ENCODE measurements at regions of chr16 and their contacts with region 1.

Region 1: GRCh38 chr16:56700195-56700594 is 17.9 kb downstream of the MT1X start:
- DNase-seq: peak; percentile 49
- H3K4me3 Mint-ChIP-seq: no peak overlapping the region
- H3K27ac Mint-ChIP-seq: peak overlapping the region; percentile 16
- H3K4me1 Mint-ChIP-seq: peaks cover 10% of the 10 kb centered on the region
- H3K27me3 Mint-ChIP-seq: no peaks in the 10 kb centered on the region
- CTCF ChIP-seq: no peak

Region 2: DNA sequence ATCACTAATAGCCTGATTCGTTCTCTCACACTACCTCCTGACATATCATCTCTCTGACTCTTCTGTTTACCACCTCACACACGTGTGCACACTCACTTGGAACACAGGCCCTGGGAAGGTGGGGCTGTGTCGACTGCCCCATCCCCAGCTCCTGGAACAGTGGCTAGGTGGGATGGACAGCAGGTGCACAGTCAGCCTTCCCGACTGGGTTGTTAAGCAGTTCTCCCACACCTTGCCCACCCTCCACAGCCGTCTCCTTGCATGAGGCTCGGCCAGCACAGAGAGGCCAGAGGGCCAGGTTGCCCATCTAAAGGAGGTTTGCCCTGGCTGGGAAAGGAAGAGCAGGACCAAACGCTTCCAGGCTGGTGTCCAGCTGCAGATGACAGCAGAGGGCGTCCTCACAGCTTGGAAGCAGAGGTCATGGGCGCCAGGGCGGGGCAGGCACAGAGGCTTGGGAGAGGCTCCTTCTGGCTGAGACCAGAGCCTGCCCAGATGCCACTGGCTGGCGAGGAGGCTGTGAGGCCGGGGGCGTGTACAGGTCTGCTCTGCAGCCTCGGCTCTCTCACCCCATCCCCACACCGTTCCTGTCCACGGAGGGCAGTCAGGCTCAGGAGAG is 367.6 kb before region 1 on chr16:
- CTCF ChIA-PET with region 1: interaction called, 3 read pairs
- POLR2A ChIA-PET with region 1: no interaction called
- intact Hi-C with region 1: loop called (anchors 2 kb)
- DNase-seq: peak; percentile 88
- H3K4me3 Mint-ChIP-seq: no peak overlapping the region
- H3K27ac Mint-ChIP-seq: no peak overlapping the region
- H3K4me1 Mint-ChIP-seq: peaks cover 15% of the 10 kb centered on the region
- H3K27me3 Mint-ChIP-seq: no peaks in the 10 kb centered on the region
- CTCF ChIP-seq: peak; percentile 70

Region 3: DNA sequence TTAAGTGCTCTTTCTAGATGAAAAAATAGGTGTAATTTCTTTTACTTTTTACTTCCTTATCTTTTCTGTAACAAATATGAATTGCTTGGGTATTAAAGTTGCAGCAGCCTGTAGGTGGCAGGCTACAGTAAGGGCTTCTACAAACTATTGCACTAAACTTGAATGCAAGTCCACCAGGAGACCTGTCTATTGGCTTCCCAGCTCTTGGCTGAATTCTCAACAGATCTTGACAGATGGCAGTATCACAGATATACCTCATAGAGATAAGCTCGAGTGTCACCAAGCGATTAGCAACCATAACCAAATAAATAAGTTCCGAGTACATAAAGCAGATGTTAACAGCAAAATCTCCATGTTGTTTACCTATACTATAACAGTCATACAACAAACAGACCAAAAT is 186.2 kb before region 1 on chr16:
- CTCF ChIA-PET with region 1: interaction called, 40 read pairs
- POLR2A ChIA-PET with region 1: interaction called, 11 read pairs
- intact Hi-C with region 1: loop called (anchors 1 kb)
- DNase-seq: peak; percentile 67
- H3K4me3 Mint-ChIP-seq: no peak overlapping the region
- H3K27ac Mint-ChIP-seq: no peak overlapping the region
- H3K4me1 Mint-ChIP-seq: peaks cover 21% of the 10 kb centered on the region
- H3K27me3 Mint-ChIP-seq: no peaks in the 10 kb centered on the region
- CTCF ChIP-seq: peak; percentile 50

Region 4: GRCh38 chr16:56600398-56600999 is 99.7 kb before region 1 on chr16:
- CTCF ChIA-PET with region 1: interaction called, 105 read pairs
- POLR2A ChIA-PET with region 1: interaction called, 75 read pairs
- intact Hi-C with region 1: loop called (anchors 1 kb)
- DNase-seq: peak; percentile 81
- H3K4me3 Mint-ChIP-seq: no peak overlapping the region
- H3K27ac Mint-ChIP-seq: no peak overlapping the region
- H3K4me1 Mint-ChIP-seq: peaks cover 14% of the 10 kb centered on the region
- H3K27me3 Mint-ChIP-seq: no peaks in the 10 kb centered on the region
- CTCF ChIP-seq: peak; percentile 71

Region 5: GRCh38 chr16:56649820-56650219 is 50.4 kb before region 1 on chr16:
- CTCF ChIA-PET with region 1: interaction called, 5 read pairs
- POLR2A ChIA-PET with region 1: interaction called, 5 read pairs
- intact Hi-C with region 1: loop called (anchors 2 kb)
- DNase-seq: peak; percentile 90
- H3K4me3 Mint-ChIP-seq: no peak overlapping the region
- H3K27ac Mint-ChIP-seq: no peak overlapping the region
- H3K4me1 Mint-ChIP-seq: peaks cover 10% of the 10 kb centered on the region
- H3K27me3 Mint-ChIP-seq: no peaks in the 10 kb centered on the region
- CTCF ChIP-seq: no peak

Region 6: DNA sequence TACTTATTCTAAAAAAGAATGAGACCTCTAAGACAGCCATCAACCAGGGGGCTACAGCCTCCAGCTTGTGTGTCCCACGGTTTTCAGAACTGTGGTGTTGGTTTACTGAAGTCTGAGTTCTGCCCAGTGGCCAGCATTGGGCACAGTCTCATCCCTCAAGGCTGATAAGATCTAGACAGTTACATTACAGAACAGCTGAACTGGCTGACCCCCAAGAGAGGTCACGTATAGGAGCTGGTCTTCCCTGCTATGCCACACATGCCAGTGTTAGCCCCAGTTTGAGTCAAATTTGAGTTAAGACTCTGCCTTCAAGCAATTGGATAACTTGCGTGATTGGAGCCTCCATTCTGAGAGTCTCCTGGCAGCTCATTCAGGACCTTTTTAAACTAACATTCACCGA is 14.9 kb after region 1 on chr16:
- CTCF ChIA-PET with region 1: interaction called, 20 read pairs
- POLR2A ChIA-PET with region 1: no interaction called
- intact Hi-C with region 1: no loop called
- DNase-seq: no peak
- H3K4me3 Mint-ChIP-seq: no peak overlapping the region
- H3K27ac Mint-ChIP-seq: no peak overlapping the region
- H3K4me1 Mint-ChIP-seq: no peaks in the 10 kb centered on the region
- H3K27me3 Mint-ChIP-seq: no peaks in the 10 kb centered on the region
- CTCF ChIP-seq: no peak

Region 7: DNA sequence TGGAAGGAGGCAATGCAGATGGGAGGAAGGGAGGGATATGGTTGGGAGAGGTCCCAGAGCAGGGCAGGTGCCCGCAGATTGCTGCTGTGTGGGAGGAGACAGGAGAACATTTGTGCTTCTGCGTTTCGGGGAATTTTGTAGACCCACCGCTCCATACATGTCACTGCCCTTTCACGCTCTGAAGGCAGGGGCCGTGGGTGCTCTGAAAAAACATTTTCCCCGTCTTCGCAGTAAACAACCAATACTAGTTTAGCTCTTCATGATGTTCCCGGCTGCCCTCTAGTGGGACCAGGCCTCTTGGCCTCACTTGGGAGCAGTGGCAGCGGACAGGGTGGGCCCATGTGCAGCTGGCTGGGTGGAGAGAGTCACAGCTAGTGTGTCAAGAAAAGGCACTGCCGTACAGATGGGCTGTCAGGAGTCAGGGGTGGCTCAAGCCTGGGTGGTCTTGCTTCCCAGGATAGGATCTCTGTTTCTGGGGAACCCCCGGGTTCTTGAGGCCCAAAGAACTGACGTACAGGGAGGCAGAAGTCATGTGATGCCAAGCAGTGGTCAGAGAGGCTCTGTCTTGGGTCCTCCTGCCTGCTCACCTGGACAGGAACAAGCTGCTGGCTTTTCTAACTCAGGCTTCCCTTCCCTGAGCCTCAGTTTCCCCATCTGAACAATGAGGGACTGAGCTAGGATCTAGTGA is 345.6 kb after region 1 on chr16:
- CTCF ChIA-PET with region 1: no interaction called
- POLR2A ChIA-PET with region 1: no interaction called
- intact Hi-C with region 1: no loop called
- DNase-seq: peak; percentile 18
- H3K4me3 Mint-ChIP-seq: no peak overlapping the region
- H3K27ac Mint-ChIP-seq: no peak overlapping the region
- H3K4me1 Mint-ChIP-seq: no peaks in the 10 kb centered on the region
- H3K27me3 Mint-ChIP-seq: no peaks in the 10 kb centered on the region
- CTCF ChIP-seq: no peak

Measured in MCF 10A (cell line).